OCI-LY7 (cell line): ENCODE measurements at regions of chr6 and their contacts with region 1.

Region 1: GRCh38 chr6:80094017-80094416 is 12.5 kb upstream of the BCKDHB start:
- DNase-seq: peak; percentile 45
- H3K4me3 ChIP-seq: no peak overlapping the region
- H3K27ac ChIP-seq: no peak overlapping the region
- H3K4me1 ChIP-seq: peaks cover 4% of the 10 kb centered on the region
- CTCF ChIP-seq: peak; percentile 85

Region 2: GRCh38 chr6:79949233-79949632 is 144.8 kb before region 1 on chr6:
- CTCF ChIA-PET with region 1: interaction called, 3 read pairs
- POLR2A ChIA-PET with region 1: no interaction called
- intact Hi-C with region 1: loop called (anchors 1 kb)
- DNase-seq: peak; percentile 87
- H3K4me3 ChIP-seq: no peak overlapping the region
- H3K27ac ChIP-seq: no peak overlapping the region
- H3K4me1 ChIP-seq: no peaks in the 10 kb centered on the region
- CTCF ChIP-seq: peak; percentile 95

Region 3: GRCh38 chr6:80156221-80156620 is 62.2 kb after region 1 on chr6:
- CTCF ChIA-PET with region 1: no interaction called
- POLR2A ChIA-PET with region 1: interaction called, 14 read pairs
- intact Hi-C with region 1: no loop called
- DNase-seq: no peak
- H3K4me3 ChIP-seq: no peak overlapping the region
- H3K27ac ChIP-seq: no peak overlapping the region
- H3K4me1 ChIP-seq: no peaks in the 10 kb centered on the region
- CTCF ChIP-seq: no peak

Region 4: DNA sequence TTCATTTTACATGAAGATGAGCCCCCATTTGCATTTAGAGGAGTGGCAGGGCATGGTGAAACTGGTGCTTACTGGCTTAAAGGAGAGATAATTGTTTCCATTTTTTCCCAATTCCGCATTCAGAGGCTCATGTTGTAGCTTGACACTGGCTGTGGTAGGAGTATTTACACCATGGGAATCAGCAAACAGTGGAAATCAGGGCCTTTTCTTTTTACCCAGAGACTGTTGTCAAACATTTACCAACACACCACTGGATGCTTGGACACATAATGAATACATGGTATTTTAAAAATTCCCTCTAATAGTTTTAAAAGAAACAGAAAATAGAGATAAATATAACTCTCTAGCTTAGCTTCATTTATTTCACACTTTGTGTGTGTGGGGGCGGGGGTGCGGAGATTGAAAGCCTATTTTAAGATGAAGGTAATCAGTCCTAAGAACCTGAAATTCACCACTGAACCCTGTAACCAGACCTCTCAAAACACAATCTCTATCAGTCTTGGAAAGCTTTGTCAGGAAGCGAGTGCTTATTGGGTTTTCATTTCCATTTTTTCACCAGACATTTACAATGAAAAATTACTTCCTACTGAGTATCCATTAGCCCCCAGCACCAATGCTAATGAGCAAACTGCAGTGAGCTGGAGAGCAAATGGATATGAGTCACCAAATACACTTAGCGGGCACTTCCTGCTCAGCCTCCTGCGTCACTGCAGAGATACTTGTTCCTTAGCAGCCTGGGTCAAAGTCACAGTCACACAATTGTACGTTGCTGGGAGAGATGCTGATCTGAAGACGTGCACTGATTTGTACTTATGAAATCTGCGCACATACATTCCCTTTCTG is 544.4 kb after region 1 on chr6:
- CTCF ChIA-PET with region 1: no interaction called
- POLR2A ChIA-PET with region 1: no interaction called
- intact Hi-C with region 1: no loop called
- DNase-seq: no peak
- H3K4me3 ChIP-seq: no peak overlapping the region
- H3K27ac ChIP-seq: no peak overlapping the region
- H3K4me1 ChIP-seq: no peaks in the 10 kb centered on the region
- CTCF ChIP-seq: no peak